ENCODE measurements at regions of chr5 and their contacts with region 1.

Region 1: DNA sequence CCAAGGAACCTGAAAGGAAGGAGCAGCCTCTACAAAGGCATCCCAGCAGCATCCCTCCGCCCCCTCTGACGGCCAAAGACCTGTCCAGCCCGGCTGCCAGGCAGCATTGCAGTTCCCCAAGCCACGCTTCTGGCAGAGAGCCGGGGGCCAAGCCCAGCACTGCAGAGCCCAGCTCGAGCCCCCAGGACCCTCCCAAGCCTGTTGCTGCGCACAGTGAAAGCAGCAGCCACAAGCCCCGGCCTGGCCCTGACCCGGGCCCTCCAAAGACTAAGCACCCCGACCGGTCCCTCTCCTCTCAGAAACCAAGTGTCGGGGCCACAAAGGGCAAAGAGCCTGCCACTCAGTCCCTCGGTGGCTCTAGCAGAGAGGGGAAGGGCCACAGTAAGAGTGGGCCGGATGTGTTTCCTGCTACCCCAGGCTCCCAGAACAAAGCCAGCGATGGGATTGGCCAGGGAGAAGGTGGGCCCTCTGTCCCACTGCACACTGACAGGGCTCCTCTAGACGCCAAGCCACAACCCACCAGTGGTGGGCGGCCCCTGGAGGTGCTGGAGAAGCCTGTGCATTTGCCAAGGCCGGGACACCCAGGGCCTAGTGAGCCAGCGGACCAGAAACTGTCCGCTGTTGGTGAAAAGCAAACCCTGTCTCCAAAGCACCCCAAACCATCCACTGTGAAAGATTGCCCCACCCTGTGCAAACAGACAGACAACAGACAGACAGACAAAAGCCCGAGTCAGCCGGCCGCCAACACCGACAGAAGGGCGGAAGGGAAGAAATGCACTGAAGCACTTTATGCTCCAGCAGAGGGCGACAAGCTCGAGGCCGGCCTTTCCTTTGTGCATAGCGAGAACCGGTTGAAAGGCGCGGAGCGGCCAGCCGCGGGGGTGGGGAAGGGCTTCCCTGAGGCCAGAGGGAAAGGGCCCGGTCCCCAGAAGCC is 30.8 kb downstream of the CD180 start:
- DNase-seq: peak; percentile 80 to 86 (median 81)
- H3K4me3 ChIP-seq: peak overlapping the region; percentile 65 to 66
- H3K4me3 Mint-ChIP-seq: peak overlapping the region; percentile 89 to 96 (median 92)
- H3K27ac ChIP-seq: peak overlapping the region; percentile 86
- H3K27ac Mint-ChIP-seq: peak overlapping the region in 6 of 7 donors; percentile 97 to 98 (median 97)
- H3K4me1 ChIP-seq: peaks cover 94% of the 10 kb centered on the region
- H3K4me1 Mint-ChIP-seq: peaks cover 47 to 80% (median 65%) of the 10 kb centered on the region in 4 donors
- H3K27me3 ChIP-seq: no peaks in the 10 kb centered on the region
- H3K27me3 Mint-ChIP-seq: no peaks in the 10 kb centered on the region

Region 2: GRCh38 chr5:67003935-67004729 is 161.7 kb before region 1 on chr5:
- CTCF ChIA-PET with region 1: interaction called, 3 read pairs
- POLR2A ChIA-PET with region 1: interaction called, 16 read pairs
- intact Hi-C with region 1: loop called (anchors 5 kb)
- DNase-seq: peak; percentile 88 to 96 (median 90)
- H3K4me3 ChIP-seq: peak overlapping the region; percentile 81 to 83
- H3K4me3 Mint-ChIP-seq: peak overlapping the region; percentile 89 to 99 (median 98)
- H3K27ac ChIP-seq: peak overlapping the region; percentile 82
- H3K27ac Mint-ChIP-seq: peak overlapping the region; percentile 95 to 99 (median 98)
- H3K4me1 ChIP-seq: peaks cover 55% of the 10 kb centered on the region
- H3K4me1 Mint-ChIP-seq: peaks cover 40 to 58% (median 50%) of the 10 kb centered on the region in 4 donors
- H3K27me3 ChIP-seq: no peaks in the 10 kb centered on the region
- H3K27me3 Mint-ChIP-seq: no peaks in the 10 kb centered on the region

Region 3: GRCh38 chr5:67176936-67177335 is 11.1 kb after region 1 on chr5:
- CTCF ChIA-PET with region 1: interaction called, 27 read pairs
- POLR2A ChIA-PET with region 1: interaction called, 109 read pairs
- intact Hi-C with region 1: loop called (anchors 2 kb)
- DNase-seq: no peak
- H3K4me3 ChIP-seq: no peak overlapping the region
- H3K4me3 Mint-ChIP-seq: peak overlapping the region in 1 of 8 donors; percentile 59
- H3K27ac ChIP-seq: no peak overlapping the region
- H3K27ac Mint-ChIP-seq: peak overlapping the region in 2 of 7 donors; percentile 8 to 46
- H3K4me1 ChIP-seq: peaks cover 10% of the 10 kb centered on the region
- H3K4me1 Mint-ChIP-seq: peaks cover 20 to 36% (median 29%) of the 10 kb centered on the region in 4 donors
- H3K27me3 ChIP-seq: no peaks in the 10 kb centered on the region
- H3K27me3 Mint-ChIP-seq: no peaks in the 10 kb centered on the region

Region 4: DNA sequence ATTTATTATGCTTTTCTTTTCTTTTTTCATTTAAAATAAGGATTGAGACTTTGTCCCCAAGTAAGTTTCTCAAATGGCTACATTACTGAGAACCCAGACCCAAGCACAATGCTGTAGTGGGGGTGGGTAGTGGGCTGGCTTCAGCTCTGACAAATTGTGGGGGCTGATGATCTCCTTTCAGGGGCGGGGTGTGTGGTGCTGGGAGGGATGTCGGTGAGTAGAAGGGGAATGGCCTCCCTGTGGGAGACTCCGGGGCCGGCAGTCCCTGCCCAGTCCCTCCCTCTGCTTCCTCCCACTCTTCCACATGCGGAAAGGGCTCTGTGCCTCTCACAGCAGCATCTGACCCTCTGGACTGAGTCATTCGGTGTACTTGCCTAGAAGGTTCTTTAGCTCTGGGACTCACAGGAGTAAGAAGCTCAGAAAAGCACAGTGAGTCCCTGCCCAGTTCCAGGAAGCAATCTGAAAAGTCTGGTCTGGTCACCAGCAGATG is 16.6 kb after region 1 on chr5:
- CTCF ChIA-PET with region 1: interaction called, 27 read pairs
- POLR2A ChIA-PET with region 1: interaction called, 109 read pairs
- intact Hi-C with region 1: loop called (anchors 2 kb)
- DNase-seq: no peak
- H3K4me3 ChIP-seq: no peak overlapping the region
- H3K4me3 Mint-ChIP-seq: peak overlapping the region in 3 of 8 donors; percentile 23 to 82 (median 26)
- H3K27ac ChIP-seq: no peak overlapping the region
- H3K27ac Mint-ChIP-seq: peak overlapping the region in 4 of 7 donors; percentile 31 to 77 (median 59)
- H3K4me1 ChIP-seq: peaks cover 35% of the 10 kb centered on the region
- H3K4me1 Mint-ChIP-seq: peaks cover 36 to 64% (median 50%) of the 10 kb centered on the region in 4 donors
- H3K27me3 ChIP-seq: no peaks in the 10 kb centered on the region
- H3K27me3 Mint-ChIP-seq: no peaks in the 10 kb centered on the region

Region 5: DNA sequence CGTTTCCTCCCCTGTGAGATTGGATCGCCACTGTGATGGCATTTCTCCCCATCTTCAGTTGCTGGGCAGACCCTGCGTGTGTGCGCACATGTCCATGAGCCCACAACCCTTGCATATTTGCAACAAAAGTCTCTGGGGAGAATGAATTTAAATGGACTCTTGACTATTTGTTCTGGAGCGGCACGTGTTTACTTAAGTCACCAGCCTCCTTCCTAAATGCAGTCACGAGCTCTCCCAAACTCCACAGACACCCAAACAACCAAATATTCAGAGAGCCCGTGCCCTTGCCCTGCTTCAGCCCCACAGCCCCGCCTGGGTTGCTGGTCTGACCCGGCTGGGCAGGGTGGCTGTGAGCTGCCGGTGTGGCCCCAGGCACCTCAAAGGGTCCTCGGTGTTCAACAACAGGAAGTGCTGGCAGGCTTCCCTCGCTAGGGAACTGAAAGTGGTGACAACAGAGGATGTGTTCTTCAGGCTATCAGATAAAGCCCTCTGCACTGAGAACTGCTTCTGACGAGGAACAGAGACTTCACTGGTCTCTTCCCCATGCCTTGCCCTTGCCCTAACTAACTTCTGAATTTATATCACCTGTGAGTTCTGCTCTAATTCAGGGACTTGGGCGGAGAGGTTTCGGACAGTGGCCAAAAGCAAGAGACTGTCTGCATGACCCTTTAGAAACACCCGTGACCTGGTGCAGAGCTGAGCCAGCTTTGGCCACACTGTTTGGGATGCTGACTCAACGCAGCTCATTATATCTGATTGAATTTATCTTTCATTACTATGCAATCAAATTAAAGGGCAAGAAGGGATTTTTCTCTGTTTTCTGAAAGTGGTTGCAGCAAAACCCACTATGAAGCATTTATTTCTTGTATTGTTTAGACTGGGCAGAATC is 50.0 kb after region 1 on chr5:
- CTCF ChIA-PET with region 1: interaction called, 851 read pairs
- POLR2A ChIA-PET with region 1: interaction called, 703 read pairs
- intact Hi-C with region 1: no loop called
- DNase-seq: peak; percentile 72 to 82 (median 80)
- H3K4me3 ChIP-seq: peak overlapping the region; percentile 10 to 44
- H3K4me3 Mint-ChIP-seq: peak overlapping the region; percentile 52 to 91 (median 82)
- H3K27ac ChIP-seq: peak overlapping the region; percentile 52
- H3K27ac Mint-ChIP-seq: peak overlapping the region; percentile 94 to 99 (median 98)
- H3K4me1 ChIP-seq: peaks cover 65% of the 10 kb centered on the region
- H3K4me1 Mint-ChIP-seq: peaks cover 57 to 69% (median 60%) of the 10 kb centered on the region in 4 donors
- H3K27me3 ChIP-seq: no peaks in the 10 kb centered on the region
- H3K27me3 Mint-ChIP-seq: no peaks in the 10 kb centered on the region

Region 6: GRCh38 chr5:67221487-67222242 is 55.9 kb after region 1 on chr5:
- CTCF ChIA-PET with region 1: interaction called, 851 read pairs
- POLR2A ChIA-PET with region 1: interaction called, 115 read pairs
- intact Hi-C with region 1: no loop called
- DNase-seq: peak; percentile 55 to 74 (median 63)
- H3K4me3 ChIP-seq: peak overlapping the region in 1 of 2 donors; percentile 6
- H3K4me3 Mint-ChIP-seq: peak overlapping the region in 7 of 8 donors; percentile 64 to 85 (median 75)
- H3K27ac ChIP-seq: peak overlapping the region; percentile 36
- H3K27ac Mint-ChIP-seq: peak overlapping the region; percentile 88 to 96 (median 94)
- H3K4me1 ChIP-seq: peaks cover 67% of the 10 kb centered on the region
- H3K4me1 Mint-ChIP-seq: peaks cover 57 to 81% (median 64%) of the 10 kb centered on the region in 4 donors
- H3K27me3 ChIP-seq: no peaks in the 10 kb centered on the region
- H3K27me3 Mint-ChIP-seq: no peaks in the 10 kb centered on the region

Region 7: GRCh38 chr5:68279984-68280383 is 1114.2 kb after region 1 on chr5:
- CTCF ChIA-PET with region 1: interaction called, 3 read pairs
- POLR2A ChIA-PET with region 1: interaction called, 11 read pairs
- intact Hi-C with region 1: no loop called
- DNase-seq: peak; percentile 78 to 88 (median 84)
- H3K4me3 ChIP-seq: peak overlapping the region; percentile 76 to 77
- H3K4me3 Mint-ChIP-seq: peak overlapping the region; percentile 89 to 97 (median 94)
- H3K27ac ChIP-seq: peak overlapping the region; percentile 66
- H3K27ac Mint-ChIP-seq: peak overlapping the region; percentile 89 to 99 (median 96)
- H3K4me1 ChIP-seq: peaks cover 81% of the 10 kb centered on the region
- H3K4me1 Mint-ChIP-seq: peaks cover 66 to 91% (median 75%) of the 10 kb centered on the region in 4 donors
- H3K27me3 ChIP-seq: no peaks in the 10 kb centered on the region
- H3K27me3 Mint-ChIP-seq: no peaks in the 10 kb centered on the region